ENCODE measurements at regions of chr5 and their contacts with region 1.

Region 1: DNA sequence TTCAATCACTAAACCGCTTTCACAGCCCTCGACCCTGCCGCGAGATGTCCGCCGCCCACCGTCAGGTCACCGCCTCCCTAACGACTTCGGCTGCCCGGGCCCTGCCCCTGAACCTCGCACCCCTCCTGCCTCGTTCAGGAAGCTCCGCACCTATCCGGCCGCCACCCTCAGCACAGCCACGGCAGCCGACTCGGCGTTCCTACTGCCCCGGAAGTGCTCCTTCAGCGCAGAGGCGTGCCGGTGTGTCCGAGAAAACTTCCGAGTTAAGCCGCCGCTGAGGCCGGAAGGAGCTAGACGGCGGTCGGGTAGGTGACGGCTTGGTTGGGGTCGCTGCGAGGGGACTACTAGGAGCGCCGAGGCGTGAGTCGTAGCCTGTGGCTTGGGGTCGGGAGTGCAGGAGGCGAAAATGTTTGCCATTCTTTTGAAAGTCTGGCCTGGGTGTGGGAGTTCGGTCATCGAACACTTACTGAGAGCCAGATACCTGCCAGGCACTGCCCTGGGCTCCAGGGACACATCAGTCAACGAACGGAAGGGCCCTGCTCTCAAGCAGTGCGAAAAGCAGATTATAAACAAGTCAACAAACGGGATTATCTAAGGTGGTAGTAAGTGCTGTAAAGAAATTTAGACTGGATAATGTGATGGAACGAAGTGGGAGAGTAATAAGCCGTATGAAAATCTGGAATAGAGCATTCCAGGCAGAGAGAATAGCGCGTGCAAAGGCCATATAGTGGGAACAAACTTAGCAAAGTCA is at the starts of genes FAM114A2 and MFAP3:
- DNase-seq: peak; percentile 77
- ATAC-seq: peak; percentile 98
- H3K4me3 Mint-ChIP-seq: peak within 1 kb of the TSS; percentile 97
- H3K27ac Mint-ChIP-seq: peak within 1 kb of the TSS; percentile 96
- H3K4me1 Mint-ChIP-seq: peaks cover 45% of the 10 kb centered on the region
- H3K27me3 Mint-ChIP-seq: no peaks in the 10 kb centered on the region
- CTCF ChIP-seq: no peak
- total RNA-seq, gene FAM114A2: 27.4 and 30.5 TPM in 2 replicates
- total RNA-seq, gene MFAP3: 18.4 and 20.8 TPM in 2 replicates

Region 2: GRCh38 chr5:154683101-154683880 is 644.4 kb after region 1 on chr5:
- CTCF ChIA-PET with region 1: no interaction called
- POLR2A ChIA-PET with region 1: interaction called, 4 read pairs
- intact Hi-C with region 1: loop called (anchors 1 kb)
- DNase-seq: no peak
- ATAC-seq: peak; percentile 32
- H3K4me3 Mint-ChIP-seq: peak overlapping the region; percentile 80
- H3K27ac Mint-ChIP-seq: no peak overlapping the region
- H3K4me1 Mint-ChIP-seq: peaks cover 6% of the 10 kb centered on the region
- H3K27me3 Mint-ChIP-seq: peaks cover 4% of the 10 kb centered on the region
- CTCF ChIP-seq: no peak

Region 3: DNA sequence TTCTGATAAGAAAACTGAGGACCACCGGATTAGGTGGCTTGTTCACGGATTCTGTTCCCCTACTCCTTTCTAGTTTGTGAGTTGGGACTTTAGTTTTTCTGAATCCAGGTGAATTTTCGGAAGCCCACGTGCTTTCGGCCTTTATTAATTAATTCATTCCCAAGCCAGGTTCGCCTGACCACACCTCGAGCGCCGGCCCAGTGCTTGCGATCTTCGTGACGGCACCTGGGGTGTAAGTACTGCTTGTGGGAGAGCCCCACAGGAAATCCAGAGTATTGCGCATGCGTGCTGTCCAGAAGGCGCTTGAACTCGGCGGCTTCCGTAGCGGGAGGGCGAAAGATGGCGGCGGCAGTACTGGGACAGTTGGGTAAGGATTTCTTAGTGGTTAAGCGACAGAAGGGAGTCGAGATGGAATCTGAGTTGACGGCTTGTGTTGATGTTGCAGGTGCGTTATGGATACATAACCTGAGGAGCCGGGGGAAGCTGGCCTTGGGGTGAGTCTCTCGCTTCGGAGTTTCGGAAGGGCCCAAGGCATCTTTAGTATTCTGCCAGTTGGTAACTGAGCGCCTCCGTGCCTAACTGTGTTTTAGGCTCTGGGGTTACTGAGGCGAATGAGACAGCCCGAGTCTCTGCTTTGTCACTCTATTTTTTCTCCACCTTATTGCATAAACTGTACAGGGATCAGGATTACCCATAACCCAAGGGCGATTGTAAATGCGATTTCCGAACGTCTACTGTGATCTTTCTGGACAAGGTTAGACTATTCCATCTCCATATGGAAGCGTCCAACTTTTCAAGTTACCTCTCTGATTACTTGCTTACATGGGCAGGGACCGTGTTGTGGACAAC is 902.1 kb after region 1 on chr5 and contains the start of gene MRPL22:
- CTCF ChIA-PET with region 1: no interaction called
- POLR2A ChIA-PET with region 1: no interaction called
- intact Hi-C with region 1: loop called (anchors 5 kb)
- DNase-seq: peak; percentile 88
- ATAC-seq: peak; percentile 63
- H3K4me3 Mint-ChIP-seq: peak within 1 kb of the TSS; percentile 99
- H3K27ac Mint-ChIP-seq: peak within 1 kb of the TSS; percentile 97
- H3K4me1 Mint-ChIP-seq: peaks cover 49% of the 10 kb centered on the region
- H3K27me3 Mint-ChIP-seq: no peaks in the 10 kb centered on the region
- CTCF ChIP-seq: no peak
- total RNA-seq, gene MRPL22: 41.9 and 42.6 TPM in 2 replicates

Region 4: GRCh38 chr5:155504606-155505005 is 1465.7 kb after region 1 on chr5:
- CTCF ChIA-PET with region 1: no interaction called
- POLR2A ChIA-PET with region 1: no interaction called
- intact Hi-C with region 1: no loop called
- DNase-seq: no peak
- ATAC-seq: no peak
- H3K4me3 Mint-ChIP-seq: no peak overlapping the region
- H3K27ac Mint-ChIP-seq: no peak overlapping the region
- H3K4me1 Mint-ChIP-seq: no peaks in the 10 kb centered on the region
- H3K27me3 Mint-ChIP-seq: no peaks in the 10 kb centered on the region
- CTCF ChIP-seq: no peak

Measured in activated B cell treated with CpG ODN at 0.5 μM for 24 hours (primary cell).